Activated CD8-positive, alpha-beta T cell treated with anti-CD3 and anti-CD28 coated beads for 36 hours (primary cell): ENCODE measurements at regions of chr11 and their contacts with region 1.

Region 1: GRCh38 chr11:1572197-1573076 is at the start of gene DUSP8:
- DNase-seq: peak; percentile 94
- ATAC-seq: peak; percentile 71
- H3K4me3 Mint-ChIP-seq: peak within 1 kb of the TSS; percentile 37
- H3K27ac Mint-ChIP-seq: no peak within 1 kb of the TSS
- H3K4me1 Mint-ChIP-seq: peaks cover 22% of the 10 kb centered on the region
- H3K27me3 Mint-ChIP-seq: peaks cover 2% of the 10 kb centered on the region
- CTCF ChIP-seq: no peak
- total RNA-seq, gene DUSP8: 1.4 to 2.0 TPM

Region 2: DNA sequence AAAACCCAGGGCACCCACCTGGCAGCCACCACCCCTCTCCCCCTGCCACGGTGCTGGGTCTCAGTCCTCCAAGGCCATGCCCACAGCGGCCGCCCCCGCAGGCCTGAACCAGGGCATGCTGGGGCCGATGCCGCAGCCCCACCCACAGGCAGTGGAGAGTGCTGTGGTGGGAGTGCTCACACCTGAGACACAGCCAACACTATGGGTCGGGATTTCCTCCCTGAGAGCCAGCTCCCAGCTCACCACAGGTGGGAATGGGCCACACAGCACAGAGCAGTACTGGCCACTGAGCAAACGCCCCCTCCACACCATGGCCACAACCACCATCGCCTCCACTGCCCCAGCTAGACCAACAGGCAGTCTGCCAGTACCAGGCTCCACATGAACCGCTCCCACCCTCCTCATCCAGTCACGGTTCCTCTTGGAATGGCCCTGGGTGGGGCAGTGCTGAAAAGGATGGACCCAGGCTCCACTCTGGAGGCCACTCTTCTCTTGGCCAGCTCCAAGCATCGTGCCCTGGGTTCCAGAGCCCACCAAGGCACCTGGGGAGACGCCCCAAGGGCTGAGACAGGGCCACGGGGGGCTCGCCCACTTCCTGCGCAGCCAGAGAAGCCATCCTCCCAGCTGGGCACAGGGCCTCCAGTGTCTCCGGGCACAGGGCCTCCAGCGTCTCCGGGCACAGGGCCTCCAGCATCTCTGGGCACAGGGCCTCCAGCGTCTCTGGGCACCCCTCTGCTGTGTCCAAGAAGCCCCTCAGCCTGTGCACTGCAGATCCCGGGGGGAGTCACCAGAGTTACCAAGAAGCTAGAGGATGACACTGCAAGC is 100.0 kb before region 1 on chr11:
- CTCF ChIA-PET with region 1: no interaction called
- POLR2A ChIA-PET with region 1: no interaction called
- intact Hi-C with region 1: no loop called
- DNase-seq: no peak
- ATAC-seq: no peak
- H3K4me3 Mint-ChIP-seq: no peak overlapping the region
- H3K27ac Mint-ChIP-seq: no peak overlapping the region
- H3K4me1 Mint-ChIP-seq: no peaks in the 10 kb centered on the region
- H3K27me3 Mint-ChIP-seq: no peaks in the 10 kb centered on the region
- CTCF ChIP-seq: no peak

Region 3: DNA sequence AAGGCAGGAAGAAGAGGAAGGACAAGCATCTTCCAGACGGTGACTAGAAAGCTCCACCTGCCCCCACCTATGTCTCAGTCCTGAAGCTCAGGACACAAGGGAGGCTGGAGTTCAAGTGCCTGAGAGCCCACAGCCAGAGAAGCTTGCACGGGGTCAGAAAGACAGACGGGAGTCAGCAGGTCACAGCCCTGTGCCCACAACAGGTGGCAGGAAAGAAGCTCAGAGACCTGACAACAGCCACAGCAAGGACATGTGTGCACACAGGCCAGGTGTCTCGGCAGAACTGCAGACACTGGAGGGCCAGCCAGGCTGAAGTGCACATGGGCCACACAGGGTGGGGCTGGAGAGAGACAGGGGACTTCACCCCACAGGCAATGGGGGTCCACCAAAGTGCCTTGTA is 48.7 kb before region 1 on chr11:
- CTCF ChIA-PET with region 1: interaction called, 10 read pairs
- POLR2A ChIA-PET with region 1: no interaction called
- intact Hi-C with region 1: no loop called
- DNase-seq: no peak
- ATAC-seq: peak; percentile 30
- H3K4me3 Mint-ChIP-seq: no peak overlapping the region
- H3K27ac Mint-ChIP-seq: peak overlapping the region; percentile 68
- H3K4me1 Mint-ChIP-seq: peaks cover 42% of the 10 kb centered on the region
- H3K27me3 Mint-ChIP-seq: no peaks in the 10 kb centered on the region
- CTCF ChIP-seq: no peak

Region 4: DNA sequence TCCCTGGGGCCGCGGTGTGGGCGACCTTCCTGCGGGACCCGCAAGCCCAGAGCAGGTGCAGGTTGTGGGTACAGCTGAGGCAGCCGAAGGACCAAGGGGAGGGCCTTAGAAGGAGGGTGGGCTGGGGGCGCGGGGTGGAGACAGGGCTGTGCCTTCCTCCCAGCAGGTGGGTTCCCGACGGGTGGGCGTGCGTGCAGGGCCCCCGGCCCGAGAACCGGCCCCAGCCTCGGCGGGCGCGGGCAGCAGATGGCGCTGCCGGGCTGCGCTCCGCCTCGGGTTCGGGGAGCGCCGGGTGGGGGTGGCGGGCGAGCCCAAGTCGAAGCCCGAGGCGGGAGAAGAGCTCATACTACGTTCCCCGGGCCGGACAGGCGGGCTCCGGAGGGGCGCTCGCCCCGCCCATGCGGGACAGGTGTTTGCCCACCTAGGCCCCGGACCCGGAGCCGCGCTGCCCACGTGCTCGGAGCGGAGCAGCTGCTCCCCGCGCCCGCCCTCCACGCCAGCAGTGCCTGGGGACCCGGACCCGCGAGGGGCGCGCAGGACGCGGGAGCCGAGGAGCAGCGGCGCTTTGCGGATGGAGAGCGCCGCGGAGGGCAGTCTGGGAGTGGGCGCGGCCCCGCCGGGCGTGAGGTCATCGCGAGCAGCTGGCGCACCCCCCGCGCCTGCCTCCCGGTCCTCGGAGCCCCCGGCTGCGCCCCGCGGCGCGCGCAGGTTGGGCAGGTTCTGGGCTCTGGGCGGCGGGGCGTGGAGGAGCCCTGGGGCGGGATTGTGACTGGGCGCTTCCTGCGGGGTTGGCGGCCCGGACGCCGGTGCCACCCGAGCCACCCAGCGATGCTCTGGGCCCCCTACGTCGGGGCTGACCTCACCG is 25.7 kb before region 1 on chr11:
- CTCF ChIA-PET with region 1: interaction called, 170 read pairs
- POLR2A ChIA-PET with region 1: interaction called, 11 read pairs
- intact Hi-C with region 1: no loop called
- DNase-seq: peak; percentile 60
- ATAC-seq: peak; percentile 79
- H3K4me3 Mint-ChIP-seq: no peak overlapping the region
- H3K27ac Mint-ChIP-seq: no peak overlapping the region
- H3K4me1 Mint-ChIP-seq: no peaks in the 10 kb centered on the region
- H3K27me3 Mint-ChIP-seq: peaks cover 22% of the 10 kb centered on the region
- CTCF ChIP-seq: peak; percentile 87

Region 5: DNA sequence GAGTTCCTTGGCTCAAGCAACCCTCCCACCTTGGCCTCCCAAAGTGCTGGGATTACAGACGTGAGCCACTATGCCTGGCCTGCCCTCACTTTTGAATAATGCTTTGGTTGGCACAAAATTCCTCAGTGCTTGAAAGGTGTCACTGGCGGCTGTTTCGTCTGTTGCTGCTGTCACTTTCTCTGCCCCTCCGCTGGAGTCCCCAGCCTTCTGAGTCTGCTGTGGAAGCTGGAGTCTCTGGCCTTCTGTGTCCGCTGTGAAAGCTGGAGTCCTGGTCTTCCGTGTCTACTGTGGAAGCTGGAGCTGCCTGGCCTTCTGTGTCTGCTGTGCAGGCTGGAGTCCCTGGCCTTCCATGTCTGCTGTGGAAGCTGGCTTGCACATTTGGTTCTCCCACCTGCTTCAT is 17.6 kb after region 1 on chr11:
- CTCF ChIA-PET with region 1: interaction called, 46 read pairs
- POLR2A ChIA-PET with region 1: interaction called, 3 read pairs
- intact Hi-C with region 1: no loop called
- DNase-seq: no peak
- ATAC-seq: no peak
- H3K4me3 Mint-ChIP-seq: no peak overlapping the region
- H3K27ac Mint-ChIP-seq: no peak overlapping the region
- H3K4me1 Mint-ChIP-seq: peaks cover 14% of the 10 kb centered on the region
- H3K27me3 Mint-ChIP-seq: peaks cover 11% of the 10 kb centered on the region
- CTCF ChIP-seq: no peak

Region 6: GRCh38 chr11:1628506-1629325 is 56.3 kb after region 1 on chr11:
- CTCF ChIA-PET with region 1: interaction called, 10 read pairs
- POLR2A ChIA-PET with region 1: interaction called, 5 read pairs
- intact Hi-C with region 1: no loop called
- DNase-seq: peak; percentile 63
- ATAC-seq: peak; percentile 99
- H3K4me3 Mint-ChIP-seq: no peak overlapping the region
- H3K27ac Mint-ChIP-seq: no peak overlapping the region
- H3K4me1 Mint-ChIP-seq: no peaks in the 10 kb centered on the region
- H3K27me3 Mint-ChIP-seq: peaks cover 14% of the 10 kb centered on the region
- CTCF ChIP-seq: peak; percentile 97

Region 7: GRCh38 chr11:1714973-1715885 is 142.8 kb after region 1 on chr11:
- CTCF ChIA-PET with region 1: no interaction called
- POLR2A ChIA-PET with region 1: no interaction called
- intact Hi-C with region 1: no loop called
- DNase-seq: no peak
- ATAC-seq: no peak
- H3K4me3 Mint-ChIP-seq: no peak overlapping the region
- H3K27ac Mint-ChIP-seq: no peak overlapping the region
- H3K4me1 Mint-ChIP-seq: no peaks in the 10 kb centered on the region
- H3K27me3 Mint-ChIP-seq: no peaks in the 10 kb centered on the region
- CTCF ChIP-seq: no peak

Region 8: GRCh38 chr11:2325719-2326118 is 753.3 kb after region 1 on chr11:
- CTCF ChIA-PET with region 1: no interaction called
- POLR2A ChIA-PET with region 1: no interaction called
- intact Hi-C with region 1: no loop called
- DNase-seq: no peak
- ATAC-seq: no peak
- H3K4me3 Mint-ChIP-seq: no peak overlapping the region
- H3K27ac Mint-ChIP-seq: peak overlapping the region; percentile 32
- H3K4me1 Mint-ChIP-seq: no peaks in the 10 kb centered on the region
- H3K27me3 Mint-ChIP-seq: peaks cover 5% of the 10 kb centered on the region
- CTCF ChIP-seq: no peak